Activated B cell treated with CpG ODN at 0.5 μM for 24 hours (primary cell): ENCODE measurements at regions of chr20 and their contacts with region 1.

Region 1: GRCh38 chr20:543369-544152 is at the start of gene CSNK2A1:
- DNase-seq: peak; percentile 98
- ATAC-seq: peak; percentile 91
- H3K4me3 Mint-ChIP-seq: peak within 1 kb of the TSS; percentile 96
- H3K27ac Mint-ChIP-seq: peak within 1 kb of the TSS; percentile 99
- H3K4me1 Mint-ChIP-seq: peaks cover 56% of the 10 kb centered on the region
- H3K27me3 Mint-ChIP-seq: no peaks in the 10 kb centered on the region
- CTCF ChIP-seq: no peak
- total RNA-seq, gene CSNK2A1: 130 and 140 TPM in 2 replicates

Region 2: GRCh38 chr20:324177-325044 is 219.2 kb before region 1 on chr20:
- CTCF ChIA-PET with region 1: no interaction called
- POLR2A ChIA-PET with region 1: interaction called, 12 read pairs
- intact Hi-C with region 1: loop called (anchors 1 kb)
- DNase-seq: peak; percentile 97
- ATAC-seq: peak; percentile 63
- H3K4me3 Mint-ChIP-seq: peak overlapping the region; percentile 89
- H3K27ac Mint-ChIP-seq: peak overlapping the region; percentile 90
- H3K4me1 Mint-ChIP-seq: peaks cover 29% of the 10 kb centered on the region
- H3K27me3 Mint-ChIP-seq: no peaks in the 10 kb centered on the region
- CTCF ChIP-seq: no peak

Region 3: GRCh38 chr20:381581-382290 is 161.8 kb before region 1 on chr20:
- CTCF ChIA-PET with region 1: no interaction called
- POLR2A ChIA-PET with region 1: interaction called, 4 read pairs
- intact Hi-C with region 1: loop called (anchors 1 kb)
- DNase-seq: peak; percentile 64
- ATAC-seq: peak; percentile 79
- H3K4me3 Mint-ChIP-seq: peak overlapping the region; percentile 83
- H3K27ac Mint-ChIP-seq: peak overlapping the region; percentile 80
- H3K4me1 Mint-ChIP-seq: peaks cover 12% of the 10 kb centered on the region
- H3K27me3 Mint-ChIP-seq: no peaks in the 10 kb centered on the region
- CTCF ChIP-seq: no peak

Region 4: GRCh38 chr20:415820-416322 is 127.7 kb before region 1 on chr20:
- CTCF ChIA-PET with region 1: no interaction called
- POLR2A ChIA-PET with region 1: no interaction called
- intact Hi-C with region 1: no loop called
- DNase-seq: no peak
- ATAC-seq: no peak
- H3K4me3 Mint-ChIP-seq: no peak overlapping the region
- H3K27ac Mint-ChIP-seq: no peak overlapping the region
- H3K4me1 Mint-ChIP-seq: peaks cover 24% of the 10 kb centered on the region
- H3K27me3 Mint-ChIP-seq: no peaks in the 10 kb centered on the region
- CTCF ChIP-seq: no peak

Region 5: GRCh38 chr20:462199-462991 is 81.2 kb before region 1 on chr20 and contains the start of gene TBC1D20:
- CTCF ChIA-PET with region 1: no interaction called
- POLR2A ChIA-PET with region 1: interaction called, 3 read pairs
- intact Hi-C with region 1: loop called (anchors 1 kb)
- DNase-seq: peak; percentile 91
- ATAC-seq: peak; percentile 96
- H3K4me3 Mint-ChIP-seq: peak within 1 kb of the TSS; percentile 93
- H3K27ac Mint-ChIP-seq: peak within 1 kb of the TSS; percentile 89
- H3K4me1 Mint-ChIP-seq: peaks cover 24% of the 10 kb centered on the region
- H3K27me3 Mint-ChIP-seq: peaks cover 2% of the 10 kb centered on the region
- CTCF ChIP-seq: no peak
- total RNA-seq, gene TBC1D20: 21.4 and 24.1 TPM in 2 replicates

Region 6: GRCh38 chr20:653110-653589 is 109.6 kb after region 1 on chr20 and contains the start of gene SRXN1:
- CTCF ChIA-PET with region 1: no interaction called
- POLR2A ChIA-PET with region 1: no interaction called
- intact Hi-C with region 1: loop called (anchors 1 kb)
- DNase-seq: peak; percentile 84
- ATAC-seq: peak; percentile 94
- H3K4me3 Mint-ChIP-seq: peak within 1 kb of the TSS; percentile 81
- H3K27ac Mint-ChIP-seq: peak within 1 kb of the TSS; percentile 67
- H3K4me1 Mint-ChIP-seq: peaks cover 23% of the 10 kb centered on the region
- H3K27me3 Mint-ChIP-seq: peaks cover 8% of the 10 kb centered on the region
- CTCF ChIP-seq: no peak
- total RNA-seq, gene SRXN1: 6.1 and 7.4 TPM in 2 replicates

Region 7: DNA sequence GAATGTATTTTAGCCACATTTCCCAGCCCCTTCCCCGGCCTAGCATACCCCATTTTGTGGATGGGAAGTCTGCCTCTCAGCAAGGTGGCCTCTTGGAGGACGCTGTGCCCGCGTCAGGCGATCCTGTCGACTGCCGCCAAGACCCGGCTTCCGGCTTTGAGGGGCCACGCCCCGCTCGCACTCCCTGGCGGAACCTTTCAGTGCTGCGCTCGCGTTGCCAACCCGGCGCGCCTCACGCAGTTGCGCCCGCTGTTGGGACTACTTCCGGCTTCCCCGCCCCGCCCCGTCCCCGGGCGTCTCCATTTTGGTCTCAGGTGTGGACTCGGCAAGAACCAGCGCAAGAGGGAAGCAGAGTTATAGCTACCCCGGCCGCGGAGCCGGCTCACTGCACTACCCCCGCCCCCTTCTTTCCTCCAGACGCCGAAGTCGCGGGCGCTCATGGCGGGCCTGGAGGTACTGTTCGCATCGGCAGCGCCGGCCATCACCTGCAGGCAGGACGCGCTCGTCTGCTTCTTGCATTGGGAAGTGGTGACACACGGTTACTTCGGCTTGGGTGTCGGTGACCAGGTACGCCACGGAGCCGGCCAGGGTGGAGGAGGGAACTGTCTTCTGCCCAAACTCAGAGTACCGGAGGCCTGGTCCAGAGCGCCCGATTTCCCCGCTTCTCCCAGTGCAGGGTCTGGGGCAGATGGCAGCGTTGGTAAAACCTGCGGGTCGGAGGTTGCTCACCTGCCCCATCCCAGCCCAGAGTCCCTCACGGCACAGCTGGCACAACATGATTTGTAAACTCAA is 575.0 kb after region 1 on chr20 and contains the start of gene PSMF1:
- CTCF ChIA-PET with region 1: no interaction called
- POLR2A ChIA-PET with region 1: no interaction called
- intact Hi-C with region 1: loop called (anchors 1 kb)
- DNase-seq: peak; percentile 98
- ATAC-seq: peak; percentile 94
- H3K4me3 Mint-ChIP-seq: peak within 1 kb of the TSS; percentile 93
- H3K27ac Mint-ChIP-seq: peak within 1 kb of the TSS; percentile 85
- H3K4me1 Mint-ChIP-seq: peaks cover 64% of the 10 kb centered on the region
- H3K27me3 Mint-ChIP-seq: no peaks in the 10 kb centered on the region
- CTCF ChIP-seq: no peak
- total RNA-seq, gene PSMF1: 130 and 137 TPM in 2 replicates

Region 8: GRCh38 chr20:1242530-1242929 is 699.0 kb after region 1 on chr20:
- CTCF ChIA-PET with region 1: no interaction called
- POLR2A ChIA-PET with region 1: no interaction called
- intact Hi-C with region 1: no loop called
- DNase-seq: no peak
- ATAC-seq: no peak
- H3K4me3 Mint-ChIP-seq: no peak overlapping the region
- H3K27ac Mint-ChIP-seq: no peak overlapping the region
- H3K4me1 Mint-ChIP-seq: no peaks in the 10 kb centered on the region
- H3K27me3 Mint-ChIP-seq: peaks cover 18% of the 10 kb centered on the region
- CTCF ChIP-seq: no peak